ENCODE measurements at regions of chr14 and their contacts with region 1.

Region 1: GRCh38 chr14:69637503-69638030 is 26.2 kb downstream of the SUSD6 start:
- DNase-seq: no peak
- H3K4me3 Mint-ChIP-seq: peak overlapping the region; percentile 38
- H3K27ac Mint-ChIP-seq: peak overlapping the region; percentile 94
- H3K4me1 Mint-ChIP-seq: peaks cover 74% of the 10 kb centered on the region
- H3K27me3 Mint-ChIP-seq: no peaks in the 10 kb centered on the region

Region 2: DNA sequence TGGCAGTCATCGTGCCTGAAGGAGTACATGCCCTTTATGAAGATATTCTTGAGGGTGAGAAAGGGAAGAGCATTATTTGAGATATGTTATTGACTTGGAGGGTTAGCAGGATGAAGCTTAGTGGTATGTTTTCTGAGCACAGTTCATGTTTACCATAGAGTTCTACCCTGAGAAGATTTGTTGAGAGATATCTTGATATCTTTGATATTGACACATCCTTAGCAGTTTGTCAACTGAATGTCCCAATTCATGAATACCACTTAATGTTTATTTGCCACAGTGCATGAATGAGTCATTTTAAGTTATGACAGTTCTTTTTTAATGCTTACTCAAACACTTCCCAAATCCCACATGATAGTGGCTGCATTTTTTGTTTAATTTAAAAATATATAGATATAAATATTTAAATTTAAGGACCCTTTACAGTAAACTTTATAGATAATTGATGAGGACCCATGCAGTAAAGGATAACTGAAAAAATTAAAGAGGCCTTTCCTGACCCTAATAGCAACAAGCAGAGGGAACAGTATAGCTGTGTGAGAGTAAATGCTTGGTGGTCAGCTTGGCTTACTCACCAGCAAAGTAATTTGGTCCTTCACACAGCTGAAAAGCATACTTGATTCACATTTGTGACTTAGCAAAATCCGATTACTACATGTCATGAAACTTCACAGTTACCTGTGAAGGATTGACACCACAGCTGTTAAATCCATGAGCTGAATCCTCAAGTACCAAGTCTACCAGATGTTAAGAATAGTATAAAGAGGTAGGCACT is 213.2 kb before region 1 on chr14:
- intact Hi-C with region 1: no loop called
- DNase-seq: no peak
- H3K4me3 Mint-ChIP-seq: no peak overlapping the region
- H3K27ac Mint-ChIP-seq: no peak overlapping the region
- H3K4me1 Mint-ChIP-seq: peaks cover 12% of the 10 kb centered on the region
- H3K27me3 Mint-ChIP-seq: no peaks in the 10 kb centered on the region

Region 3: DNA sequence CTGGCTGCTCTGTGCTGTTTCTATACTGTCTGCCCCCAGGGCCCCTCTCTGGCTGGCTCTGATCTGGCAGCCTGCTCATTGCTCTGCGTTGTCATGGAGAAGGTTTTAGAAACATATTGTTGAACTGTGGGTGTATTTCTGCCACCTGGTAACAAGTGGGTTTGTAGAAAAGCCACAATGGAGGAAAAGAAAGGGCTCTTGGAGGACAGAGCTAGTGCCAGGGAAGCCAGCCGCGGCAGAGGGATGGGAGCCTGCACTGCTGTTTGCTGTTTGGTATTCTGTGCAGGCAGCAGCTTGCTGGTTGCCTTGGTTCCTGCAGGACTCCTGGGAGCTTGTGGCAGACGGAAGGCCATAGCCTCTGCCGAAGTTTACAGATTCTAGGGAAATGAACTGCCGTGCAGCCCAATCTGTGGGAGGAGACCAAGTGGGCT is 78.0 kb before region 1 on chr14:
- intact Hi-C with region 1: no loop called
- DNase-seq: no peak
- H3K4me3 Mint-ChIP-seq: no peak overlapping the region
- H3K27ac Mint-ChIP-seq: no peak overlapping the region
- H3K4me1 Mint-ChIP-seq: no peaks in the 10 kb centered on the region
- H3K27me3 Mint-ChIP-seq: peaks cover 41% of the 10 kb centered on the region

Region 4: GRCh38 chr14:69611201-69612011 is 26.2 kb before region 1 on chr14 and contains the start of gene SUSD6:
- intact Hi-C with region 1: loop called (anchors 1 kb)
- DNase-seq: peak; percentile 80
- H3K4me3 Mint-ChIP-seq: peak within 1 kb of the TSS; percentile 94
- H3K27ac Mint-ChIP-seq: peak within 1 kb of the TSS; percentile 97
- H3K4me1 Mint-ChIP-seq: peaks cover 52% of the 10 kb centered on the region
- H3K27me3 Mint-ChIP-seq: no peaks in the 10 kb centered on the region
- total RNA-seq, gene SUSD6: 46.6 and 46.7 TPM in 2 replicates

Region 5: DNA sequence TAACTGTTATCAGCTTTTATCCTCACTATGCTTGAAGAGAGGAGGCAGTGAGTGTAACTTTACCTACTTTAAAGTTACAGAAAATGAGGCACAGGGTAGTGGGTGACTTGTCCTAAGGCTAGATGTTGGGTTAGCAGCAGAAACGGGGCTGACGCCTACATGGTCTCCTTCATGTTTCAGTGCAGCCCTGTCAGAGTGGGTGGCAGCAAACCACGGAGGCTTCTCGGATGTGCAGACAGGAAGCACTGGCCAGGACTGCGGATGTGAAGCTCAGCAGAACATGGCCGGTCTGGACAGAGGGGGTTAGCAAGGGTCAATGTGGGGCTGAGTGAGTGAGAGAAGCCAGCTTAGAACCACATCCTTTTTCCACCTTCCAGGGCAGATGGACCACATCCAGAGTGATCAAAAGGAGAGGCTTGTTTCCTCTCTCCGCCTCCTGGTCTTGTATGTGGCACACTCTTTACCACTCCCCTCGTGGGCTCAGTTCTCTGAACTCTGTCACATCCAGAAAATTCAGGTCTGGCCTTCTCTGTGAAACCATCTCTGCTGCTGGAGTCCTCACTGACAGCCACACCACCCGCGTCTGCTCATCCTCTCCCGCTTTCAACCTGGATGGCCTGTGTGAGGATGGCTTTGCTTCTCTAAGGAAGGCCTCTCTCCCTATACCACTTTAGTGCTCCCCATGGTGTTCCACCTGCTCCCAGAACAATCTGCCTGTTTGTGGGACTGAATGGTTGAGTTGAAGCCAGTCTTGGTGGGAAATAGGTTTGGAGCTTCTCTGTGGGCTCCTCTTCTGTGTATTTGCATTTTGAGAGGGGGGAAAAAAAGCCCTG is 12.1 kb before region 1 on chr14:
- intact Hi-C with region 1: loop called (anchors 1 kb)
- DNase-seq: peak; percentile 72
- H3K4me3 Mint-ChIP-seq: peak overlapping the region; percentile 69
- H3K27ac Mint-ChIP-seq: peak overlapping the region; percentile 89
- H3K4me1 Mint-ChIP-seq: peaks cover 76% of the 10 kb centered on the region
- H3K27me3 Mint-ChIP-seq: no peaks in the 10 kb centered on the region

Region 6: DNA sequence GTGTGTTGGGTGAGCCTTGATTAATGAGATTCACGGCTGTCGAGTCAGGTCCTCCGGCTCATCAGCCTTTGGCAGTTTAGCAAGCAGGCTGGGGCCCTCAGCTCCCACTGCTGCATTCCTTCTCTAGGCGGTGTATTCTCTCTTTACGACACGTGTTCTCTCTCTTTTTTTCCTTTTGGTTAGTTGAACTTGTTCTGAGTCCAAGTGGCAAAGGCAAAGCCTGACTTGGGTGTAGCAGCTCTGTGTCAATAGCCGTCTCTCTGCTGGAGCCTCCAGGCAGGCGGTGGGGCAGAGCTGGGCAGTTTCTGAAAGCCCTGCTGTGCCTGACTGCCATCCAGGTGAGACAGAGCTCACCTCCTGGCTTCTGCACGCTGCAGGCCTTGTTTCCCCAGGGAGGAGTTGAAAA is 20.4 kb after region 1 on chr14:
- intact Hi-C with region 1: loop called (anchors 2 kb)
- DNase-seq: no peak
- H3K4me3 Mint-ChIP-seq: no peak overlapping the region
- H3K27ac Mint-ChIP-seq: peak overlapping the region; percentile 44
- H3K4me1 Mint-ChIP-seq: peaks cover 72% of the 10 kb centered on the region
- H3K27me3 Mint-ChIP-seq: no peaks in the 10 kb centered on the region

Region 7: GRCh38 chr14:69673578-69674305 is 36.2 kb after region 1 on chr14:
- intact Hi-C with region 1: loop called (anchors 1 kb)
- DNase-seq: no peak
- H3K4me3 Mint-ChIP-seq: peak overlapping the region; percentile 55
- H3K27ac Mint-ChIP-seq: peak overlapping the region; percentile 97
- H3K4me1 Mint-ChIP-seq: peaks cover 74% of the 10 kb centered on the region
- H3K27me3 Mint-ChIP-seq: no peaks in the 10 kb centered on the region

Region 8: DNA sequence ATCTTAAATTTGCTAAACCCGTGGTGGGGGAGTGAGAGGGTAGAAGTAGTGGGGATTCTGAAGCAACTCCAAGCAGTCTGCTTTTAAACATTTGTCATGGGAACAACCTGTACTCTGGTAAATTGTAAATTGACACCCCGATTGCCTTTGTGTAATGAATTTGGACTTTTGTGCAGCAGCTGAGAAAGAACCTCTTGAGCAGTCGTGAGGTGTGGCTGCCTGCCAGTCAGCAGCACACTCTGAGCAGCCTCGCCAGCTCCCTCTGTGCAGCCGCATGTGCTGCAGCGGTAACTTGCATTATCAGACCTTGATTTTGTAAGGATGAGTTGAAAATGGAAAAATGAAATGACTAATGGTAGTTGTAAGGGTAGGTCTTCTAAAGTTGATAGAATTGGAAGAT is 48.1 kb after region 1 on chr14:
- intact Hi-C with region 1: loop called (anchors 2 kb)
- DNase-seq: no peak
- H3K4me3 Mint-ChIP-seq: peak overlapping the region; percentile 9
- H3K27ac Mint-ChIP-seq: peak overlapping the region; percentile 95
- H3K4me1 Mint-ChIP-seq: peaks cover 78% of the 10 kb centered on the region
- H3K27me3 Mint-ChIP-seq: no peaks in the 10 kb centered on the region

Region 9: DNA sequence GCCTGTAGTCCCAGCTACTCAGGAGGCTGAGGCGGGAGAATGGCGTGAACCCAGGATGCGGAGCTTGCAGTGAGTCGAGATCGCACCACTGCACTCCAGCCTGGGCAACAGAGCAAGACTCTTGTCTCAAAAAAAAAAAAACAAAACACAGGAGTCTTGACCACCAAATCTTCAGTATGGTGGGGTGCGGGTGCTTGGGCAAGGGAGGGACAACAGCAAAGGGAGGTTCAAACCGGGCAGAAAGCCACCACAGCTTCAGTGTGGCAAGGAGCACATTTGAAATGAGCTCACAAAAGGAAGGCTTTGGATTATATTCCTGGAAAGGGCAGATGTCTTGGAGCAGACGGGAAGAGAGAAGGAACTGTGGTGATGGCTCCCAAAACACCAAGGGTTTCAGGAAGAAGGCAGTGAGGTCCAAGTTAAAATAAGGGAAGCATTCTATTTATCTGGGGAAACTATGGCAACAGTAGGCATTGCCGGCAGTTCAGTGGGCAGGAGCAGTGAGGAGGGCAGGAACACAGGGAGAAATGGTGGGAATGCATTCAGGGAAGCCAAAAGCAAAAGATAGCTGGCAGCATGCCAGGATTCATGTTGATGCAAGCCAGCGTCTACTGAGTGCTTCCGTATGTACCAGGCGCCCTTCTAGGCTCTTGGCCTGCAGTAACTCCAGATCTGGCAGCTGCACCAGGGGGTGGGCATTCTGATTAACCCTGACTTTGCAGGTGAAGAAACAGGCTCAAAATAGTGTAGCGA is 78.3 kb after region 1 on chr14:
- intact Hi-C with region 1: loop called (anchors 1 kb)
- DNase-seq: no peak
- H3K4me3 Mint-ChIP-seq: peak overlapping the region; percentile 47
- H3K27ac Mint-ChIP-seq: peak overlapping the region; percentile 87
- H3K4me1 Mint-ChIP-seq: peaks cover 68% of the 10 kb centered on the region
- H3K27me3 Mint-ChIP-seq: no peaks in the 10 kb centered on the region